ENCODE measurements at regions of chrX and their contacts with region 1.

Region 1: GRCh38 chrX:20437683-20438082 is 171.0 kb upstream of the RPS6KA3 start:
- DNase-seq: no peak
- ATAC-seq: peak; percentile 75
- H3K4me3 Mint-ChIP-seq: peak overlapping the region; percentile 49
- H3K27ac Mint-ChIP-seq: peak overlapping the region; percentile 95
- H3K4me1 Mint-ChIP-seq: peaks cover 77% of the 10 kb centered on the region
- H3K27me3 Mint-ChIP-seq: no peaks in the 10 kb centered on the region

Region 2: DNA sequence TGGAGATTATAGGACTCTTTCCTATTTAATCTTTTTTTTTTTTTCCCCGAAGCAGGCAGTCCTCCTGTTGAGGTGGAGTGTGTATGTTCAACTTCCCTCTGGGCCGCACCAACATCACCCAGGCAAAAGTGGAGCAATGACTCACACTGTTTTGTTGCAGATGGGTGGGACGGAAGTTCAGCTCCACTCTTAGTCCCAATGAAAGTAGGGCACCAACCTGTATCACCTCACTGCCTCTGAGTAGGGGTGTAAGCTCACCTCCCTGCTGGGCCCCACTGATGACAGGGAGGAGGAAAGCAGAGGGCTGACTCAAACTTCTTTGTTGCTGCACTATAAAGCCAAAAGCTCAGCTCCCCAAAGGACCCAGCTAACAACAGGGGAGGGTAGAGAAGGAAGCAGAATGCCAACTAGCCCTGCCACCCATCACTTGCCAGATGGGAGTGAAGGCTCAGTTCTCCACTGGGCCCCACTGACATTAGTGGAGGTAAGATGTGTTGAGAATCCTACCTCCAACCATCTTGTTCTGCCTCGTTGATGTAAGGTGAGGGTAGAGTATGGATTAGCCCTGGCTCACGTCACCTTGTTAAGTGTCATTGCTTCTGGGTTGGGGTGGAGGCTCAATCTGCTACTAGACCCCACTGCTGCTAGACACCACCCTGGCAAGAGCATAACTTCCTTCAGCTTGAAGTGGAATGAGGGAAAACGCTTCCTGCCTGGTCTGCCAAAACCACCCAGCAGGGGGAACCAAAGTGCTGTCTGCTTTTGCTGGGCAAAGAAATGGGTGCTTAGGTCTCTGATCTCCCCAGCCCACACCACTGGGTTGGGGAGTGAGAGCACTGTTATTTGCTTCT is 185.1 kb before region 1 on chrX:
- CTCF ChIA-PET with region 1: interaction called, 27 read pairs
- POLR2A ChIA-PET with region 1: no interaction called
- DNase-seq: peak; percentile 71
- ATAC-seq: peak; percentile 80
- H3K4me3 Mint-ChIP-seq: no peak overlapping the region
- H3K27ac Mint-ChIP-seq: peak overlapping the region; percentile 57
- H3K4me1 Mint-ChIP-seq: peaks cover 52% of the 10 kb centered on the region
- H3K27me3 Mint-ChIP-seq: no peaks in the 10 kb centered on the region

Region 3: GRCh38 chrX:20266810-20267606 is 170.7 kb before region 1 on chrX and contains the start of gene RPS6KA3:
- CTCF ChIA-PET with region 1: interaction called, 3 read pairs
- POLR2A ChIA-PET with region 1: interaction called, 10 read pairs
- DNase-seq: peak; percentile 92
- ATAC-seq: peak; percentile 88
- H3K4me3 Mint-ChIP-seq: peak within 1 kb of the TSS; percentile 97
- H3K27ac Mint-ChIP-seq: peak within 1 kb of the TSS; percentile 97
- H3K4me1 Mint-ChIP-seq: peaks cover 18% of the 10 kb centered on the region
- H3K27me3 Mint-ChIP-seq: no peaks in the 10 kb centered on the region
- total RNA-seq, gene RPS6KA3: 80.2 to 82.0 TPM

Region 4: DNA sequence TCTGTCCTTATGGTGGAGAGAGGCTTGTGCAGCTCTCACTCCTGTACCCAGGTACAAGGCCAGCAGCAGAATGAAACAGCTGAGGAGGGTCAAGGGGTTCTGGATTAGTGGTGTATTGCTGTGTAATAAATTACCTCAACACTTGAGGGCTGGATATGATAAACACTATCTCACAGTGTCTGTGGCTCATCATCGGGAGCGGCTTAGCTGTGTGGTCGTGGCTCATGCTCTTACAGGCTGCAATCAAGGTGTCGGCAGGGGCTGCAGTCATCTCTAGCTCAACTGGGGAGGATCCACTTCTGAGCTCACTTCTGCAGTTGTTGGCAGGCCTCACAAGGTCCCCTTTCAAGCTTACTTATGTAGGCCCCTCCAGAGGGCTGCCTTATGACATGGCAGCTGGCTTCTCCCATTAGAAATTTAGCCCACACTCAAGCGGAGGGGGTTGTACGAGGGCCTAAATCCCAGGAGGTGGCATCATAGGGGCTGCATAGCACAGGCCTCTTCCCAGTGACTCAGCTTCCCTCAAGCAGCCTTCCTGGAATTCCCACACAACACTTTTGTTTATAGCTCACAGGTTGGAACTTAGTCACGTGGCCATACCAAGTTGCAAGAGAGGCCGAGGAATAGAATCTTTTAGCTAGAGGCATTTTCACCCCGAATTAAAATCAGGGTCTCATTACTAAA is 22.8 kb before region 1 on chrX:
- CTCF ChIA-PET with region 1: interaction called, 13 read pairs
- POLR2A ChIA-PET with region 1: interaction called, 6 read pairs
- DNase-seq: peak; percentile 31
- ATAC-seq: peak; percentile 8
- H3K4me3 Mint-ChIP-seq: no peak overlapping the region
- H3K27ac Mint-ChIP-seq: peak overlapping the region; percentile 90
- H3K4me1 Mint-ChIP-seq: peaks cover 58% of the 10 kb centered on the region
- H3K27me3 Mint-ChIP-seq: no peaks in the 10 kb centered on the region

Region 5: GRCh38 chrX:20427173-20427770 is 10.4 kb before region 1 on chrX:
- CTCF ChIA-PET with region 1: no interaction called
- POLR2A ChIA-PET with region 1: no interaction called
- DNase-seq: no peak
- ATAC-seq: no peak
- H3K4me3 Mint-ChIP-seq: no peak overlapping the region
- H3K27ac Mint-ChIP-seq: no peak overlapping the region
- H3K4me1 Mint-ChIP-seq: peaks cover 4% of the 10 kb centered on the region
- H3K27me3 Mint-ChIP-seq: no peaks in the 10 kb centered on the region